HCT116 (cell line): ENCODE measurements at regions of chr14 and their contacts with region 1.

Region 1: DNA sequence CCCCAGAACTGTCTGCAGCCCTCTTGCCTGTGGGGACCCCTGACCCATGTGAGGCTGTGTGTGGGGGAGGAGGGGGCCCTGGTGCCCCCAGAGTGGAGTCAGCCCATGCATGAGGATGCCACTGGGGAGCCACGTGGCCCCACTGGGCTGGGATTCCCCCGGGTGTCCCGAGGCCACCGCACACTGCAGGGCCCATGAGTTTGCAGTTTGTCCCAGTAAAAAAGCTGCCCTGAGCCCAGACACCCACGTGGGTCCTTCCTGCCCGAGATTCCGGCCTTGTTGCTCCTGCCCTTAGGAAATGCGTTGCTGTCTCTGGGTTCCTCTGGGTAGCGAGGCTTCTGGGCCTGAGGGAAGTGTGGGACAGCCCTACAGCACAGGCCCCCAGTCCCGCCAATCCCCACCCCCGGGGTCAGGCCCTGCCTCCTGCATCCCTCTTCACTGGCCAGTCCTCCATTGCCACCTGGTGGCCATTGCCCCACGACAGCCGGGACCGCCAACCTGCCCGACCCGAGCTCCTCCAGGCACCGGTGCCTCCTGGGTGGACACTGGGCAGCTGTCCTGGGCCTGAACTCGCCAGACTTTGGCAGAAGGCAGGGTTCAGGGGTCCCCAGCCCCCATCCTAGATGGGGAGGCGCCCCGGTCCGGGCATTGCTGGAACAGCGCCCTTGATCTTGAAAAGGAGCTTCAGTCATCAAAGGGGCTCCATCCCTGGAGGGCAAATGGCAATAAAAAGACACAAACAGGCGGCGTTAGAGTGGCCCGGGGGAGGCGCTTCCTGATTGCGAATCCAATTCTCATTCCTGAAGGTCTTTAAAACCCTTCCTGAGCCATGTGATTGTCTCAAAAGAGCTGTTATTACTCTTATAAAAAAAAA is 15.6 kb upstream of the C14orf180 start:
- DNase-seq: peak; percentile 51
- ATAC-seq: peak; percentile 95
- H3K4me3 ChIP-seq: no peak overlapping the region
- H3K27ac ChIP-seq: no peak overlapping the region
- H3K4me1 ChIP-seq: peaks cover 0 to 9% of the 10 kb centered on the region in 2 experiments; a peak in 2 of 4 replicates
- H3K27me3 ChIP-seq: no peaks in the 10 kb centered on the region
- CTCF ChIP-seq: peak; percentile 89 to 94 (median 93)
- POLR2A ChIP-seq: no peak
- RAD21 ChIP-seq: peak; percentile 98

Region 2: DNA sequence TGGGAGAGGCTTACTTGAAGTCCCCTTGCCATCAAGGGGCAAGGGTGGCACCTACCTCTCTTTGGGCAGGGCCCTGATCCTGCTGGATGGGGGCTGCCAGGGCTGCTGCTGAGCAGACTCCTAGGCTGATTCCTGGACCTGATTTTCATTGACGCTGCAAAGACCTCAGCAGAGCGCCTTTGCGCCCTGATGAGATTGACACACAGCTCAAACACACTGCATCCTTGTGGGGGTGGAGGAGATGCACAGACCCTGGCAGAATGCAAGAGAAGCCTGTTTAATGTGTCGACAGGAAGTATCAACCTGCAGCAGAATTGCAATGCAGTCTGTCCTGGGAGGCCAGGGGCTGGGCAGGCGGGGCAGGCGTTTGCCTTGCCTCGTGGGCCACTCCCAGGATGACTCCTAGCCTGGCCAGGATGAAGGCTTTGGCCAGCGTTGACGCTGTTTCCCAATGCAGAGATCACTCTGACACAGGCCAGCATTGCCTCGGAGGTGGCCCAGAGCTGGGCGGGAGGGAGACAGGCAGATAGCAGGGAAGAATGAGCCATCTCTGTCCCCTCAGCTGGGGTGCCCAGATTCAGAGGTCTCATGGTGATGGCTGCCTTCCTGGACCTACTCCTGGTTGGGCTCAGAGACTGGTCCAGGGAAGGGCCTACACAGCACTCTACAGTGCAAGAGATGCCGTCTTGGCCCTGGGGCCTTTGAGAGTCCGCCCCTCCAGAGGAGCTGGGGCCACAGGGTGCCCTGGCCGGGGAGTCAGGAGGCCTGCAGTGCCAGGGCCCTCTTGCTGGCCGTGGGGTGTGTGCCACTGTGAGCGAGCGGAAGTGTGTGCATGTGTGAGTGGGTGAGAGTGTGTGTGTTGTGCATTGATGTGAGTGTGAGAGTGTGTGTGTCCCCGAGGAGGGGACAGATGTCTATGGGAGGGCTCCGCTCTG is 317.3 kb before region 1 on chr14:
- CTCF ChIA-PET with region 1: no interaction called
- POLR2A ChIA-PET with region 1: no interaction called
- RAD21 ChIA-PET with region 1: no interaction called
- intact Hi-C with region 1: no loop called
- DNase-seq: no peak
- ATAC-seq: no peak
- H3K4me3 ChIP-seq: no peak overlapping the region
- H3K27ac ChIP-seq: no peak overlapping the region
- H3K4me1 ChIP-seq: no peaks in the 10 kb centered on the region
- H3K27me3 ChIP-seq: no peaks in the 10 kb centered on the region
- CTCF ChIP-seq: no peak
- POLR2A ChIP-seq: no peak
- RAD21 ChIP-seq: no peak

Region 3: GRCh38 chr14:104639889-104640548 is 76.0 kb after region 1 on chr14:
- CTCF ChIA-PET with region 1: interaction called, 4 read pairs
- POLR2A ChIA-PET with region 1: no interaction called
- RAD21 ChIA-PET with region 1: no interaction called
- intact Hi-C with region 1: loop called (anchors 1 kb)
- DNase-seq: peak; percentile 27
- ATAC-seq: peak; percentile 99
- H3K4me3 ChIP-seq: 0 out of 4 replicates have a peak overlapping the region, but pooled peaks of 1 of the 2 experiments have one; percentile 5
- H3K27ac ChIP-seq: no peak overlapping the region; the same call in 1 of the 2 replicates
- H3K4me1 ChIP-seq: peaks cover 4 to 6% of the 10 kb centered on the region in 2 experiments
- H3K27me3 ChIP-seq: peaks cover 5% of the 10 kb centered on the region; the same call in 1 of the 2 replicates
- CTCF ChIP-seq: peak; percentile 89 to 98 (median 96)
- POLR2A ChIP-seq: no peak
- RAD21 ChIP-seq: peak; percentile 98